ENCODE measurements at regions of chr10 and their contacts with region 1.

Region 1: GRCh38 chr10:21083871-21084295 is 186.8 kb upstream of the NEBL start:
- DNase-seq: no peak
- ATAC-seq: no peak
- H3K4me3 ChIP-seq: no peak overlapping the region
- H3K27ac ChIP-seq: no peak overlapping the region
- H3K4me1 ChIP-seq: no peaks in the 10 kb centered on the region
- H3K27me3 ChIP-seq: no peaks in the 10 kb centered on the region
- CTCF ChIP-seq: no peak
- POLR2A ChIP-seq: no peak

Region 2: GRCh38 chr10:20885678-20886077 is 198.2 kb before region 1 on chr10:
- in situ Hi-C with region 1: no loop called
- intact Hi-C with region 1: no loop called
- DNase-seq: no peak
- ATAC-seq: no peak
- H3K4me3 ChIP-seq: no peak overlapping the region
- H3K27ac ChIP-seq: no peak overlapping the region
- H3K4me1 ChIP-seq: no peaks in the 10 kb centered on the region
- H3K27me3 ChIP-seq: no peaks in the 10 kb centered on the region
- CTCF ChIP-seq: no peak
- POLR2A ChIP-seq: no peak

Region 3: GRCh38 chr10:21273400-21273932 is 189.6 kb after region 1 on chr10:
- in situ Hi-C with region 1: loop called in 2 of 4 experiments (anchors 5 kb)
- intact Hi-C with region 1: no loop called
- DNase-seq: no peak
- ATAC-seq: no peak
- H3K4me3 ChIP-seq: no peak overlapping the region
- H3K27ac ChIP-seq: no peak overlapping the region
- H3K4me1 ChIP-seq: no peaks in the 10 kb centered on the region
- H3K27me3 ChIP-seq: no peaks in the 10 kb centered on the region
- CTCF ChIP-seq: no peak
- POLR2A ChIP-seq: no peak